ENCODE measurements at regions of chr5 and their contacts with region 1.

Region 1: DNA sequence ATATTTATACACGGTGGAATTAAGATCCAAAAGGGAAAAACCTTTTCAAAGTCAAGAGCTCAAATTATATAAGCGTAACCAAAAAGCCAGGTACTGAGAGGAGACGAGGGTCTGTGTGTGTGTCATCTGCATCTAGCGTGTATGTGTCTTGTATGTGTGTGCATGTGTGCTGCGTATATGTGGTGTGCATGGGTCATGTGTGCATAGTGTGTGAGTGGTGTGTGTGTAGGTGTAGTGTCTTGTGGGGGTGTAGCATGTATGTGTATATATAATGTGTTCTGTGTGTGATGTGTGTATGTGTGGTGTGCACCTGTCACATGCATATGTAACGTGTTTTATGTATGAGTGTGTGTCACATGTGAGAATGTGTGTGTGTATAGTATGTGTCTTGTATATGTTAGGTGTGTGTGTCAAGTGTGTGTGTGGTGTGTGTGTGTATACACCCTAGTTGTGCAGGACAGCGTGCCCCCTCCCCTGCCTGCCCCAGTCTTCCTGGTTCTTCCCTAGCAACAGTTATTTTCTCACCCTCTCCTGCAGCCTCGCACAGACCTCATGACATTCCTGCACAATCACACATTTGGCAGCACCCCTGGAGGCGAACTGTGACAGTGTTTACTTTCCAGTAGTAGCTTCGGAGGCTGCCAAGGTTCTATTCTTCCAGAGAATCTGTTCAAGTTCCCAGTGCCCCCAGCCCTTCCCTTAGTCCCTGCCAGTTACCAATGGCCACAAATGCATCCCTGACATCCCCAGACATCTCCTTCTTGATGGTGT is 27.1 kb upstream of the TNIP1 start:
- DNase-seq: peak; percentile 63
- H3K4me3 ChIP-seq: no peak overlapping the region
- H3K27ac ChIP-seq: peak overlapping the region; percentile 78
- H3K4me1 ChIP-seq: peaks cover 70% of the 10 kb centered on the region
- H3K27me3 ChIP-seq: no peaks in the 10 kb centered on the region
- CTCF ChIP-seq: peak; percentile 34

Region 2: GRCh38 chr5:151051066-151051930 is 56.6 kb before region 1 on chr5:
- intact Hi-C with region 1: loop called (anchors 5 kb)
- DNase-seq: peak; percentile 81
- H3K4me3 ChIP-seq: no peak overlapping the region
- H3K27ac ChIP-seq: peak overlapping the region; percentile 61
- H3K4me1 ChIP-seq: peaks cover 37% of the 10 kb centered on the region
- H3K27me3 ChIP-seq: no peaks in the 10 kb centered on the region
- CTCF ChIP-seq: peak; percentile 89